ENCODE measurements at regions of chr7 and their contacts with region 1.

Region 1: DNA sequence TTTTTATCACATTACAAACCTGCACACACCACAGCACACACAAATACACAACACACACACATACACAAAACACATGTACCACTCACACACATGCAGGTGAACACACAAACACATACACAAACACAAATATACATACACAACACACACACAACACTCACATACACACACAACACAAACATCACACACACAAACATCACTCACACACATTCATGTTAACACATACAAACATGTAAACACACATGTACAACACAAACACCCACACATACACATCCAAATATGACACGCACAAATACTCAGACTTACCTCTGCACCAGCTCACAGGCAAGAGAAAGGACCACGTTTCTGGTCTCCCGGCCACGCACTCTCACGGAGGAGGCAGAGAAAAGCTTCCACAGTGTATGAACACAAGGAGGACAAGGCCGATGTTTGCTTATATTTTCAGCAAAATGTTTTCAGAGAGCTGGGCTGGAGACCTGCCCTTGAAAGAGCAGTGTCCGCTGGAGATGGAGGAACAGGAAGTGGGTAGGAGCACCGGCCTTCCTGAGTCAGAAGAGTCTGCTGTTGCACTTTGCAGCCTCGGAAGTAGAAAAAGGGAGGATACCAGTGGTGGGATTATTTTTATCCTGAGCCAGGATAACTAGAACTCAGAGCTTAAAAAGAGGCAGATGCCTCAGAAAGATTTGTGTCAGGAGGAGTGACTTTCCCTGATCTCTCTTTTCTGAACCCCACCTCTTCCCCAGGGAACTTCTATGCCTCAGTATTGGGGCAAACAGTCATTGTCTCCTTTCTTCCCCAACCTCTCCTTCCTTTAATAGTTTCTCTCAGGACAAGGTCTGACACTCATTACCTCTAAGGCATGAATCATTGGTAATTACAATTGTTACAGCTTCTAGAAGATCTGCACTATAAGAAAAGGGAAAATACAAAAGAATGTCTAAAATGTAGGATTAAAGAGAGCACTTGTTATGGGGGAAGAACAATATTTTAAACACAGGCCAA is at the start of gene GIMAP6:
- DNase-seq: peak in 8 of 9 donors; percentile 37 to 61 (median 44)
- ATAC-seq: peak; percentile 67
- H3K4me3 ChIP-seq: peak within 1 kb of the TSS; percentile 66
- H3K4me3 Mint-ChIP-seq: peak within 1 kb of the TSS; percentile 89 to 99 (median 95)
- H3K27ac ChIP-seq: peak within 1 kb of the TSS; percentile 74
- H3K27ac Mint-ChIP-seq: peak within 1 kb of the TSS; percentile 89 to 99 (median 95)
- H3K4me1 ChIP-seq: peaks cover 48 to 52% of the 10 kb centered on the region in 2 donors
- H3K4me1 Mint-ChIP-seq: peaks cover 54 to 92% (median 84%) of the 10 kb centered on the region in 7 donors
- H3K27me3 ChIP-seq: no peaks in the 10 kb centered on the region
- H3K27me3 Mint-ChIP-seq: no peaks in the 10 kb centered on the region
- total RNA-seq, gene GIMAP6: 40.3 to 173 (median 152) TPM

Region 2: DNA sequence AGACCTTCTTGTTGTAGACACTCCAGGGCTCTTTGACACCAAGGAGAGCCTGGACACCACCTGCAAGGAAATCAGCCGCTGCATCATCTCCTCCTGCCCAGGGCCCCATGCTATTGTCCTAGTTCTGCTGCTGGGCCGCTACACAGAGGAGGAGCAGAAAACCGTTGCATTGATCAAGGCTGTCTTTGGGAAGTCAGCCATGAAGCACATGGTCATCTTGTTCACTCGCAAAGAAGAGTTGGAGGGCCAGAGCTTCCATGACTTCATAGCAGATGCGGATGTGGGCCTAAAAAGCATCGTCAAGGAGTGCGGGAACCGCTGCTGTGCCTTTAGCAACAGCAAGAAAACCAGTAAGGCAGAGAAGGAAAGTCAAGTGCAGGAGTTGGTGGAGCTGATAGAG is 112.0 kb before region 1 on chr7:
- CTCF ChIA-PET with region 1: interaction called, 5 read pairs
- POLR2A ChIA-PET with region 1: interaction called, 46 read pairs
- intact Hi-C with region 1: loop called (anchors 1 kb)
- DNase-seq: peak in 4 of 9 donors; percentile 17 to 51 (median 42)
- ATAC-seq: peak; percentile 29
- H3K4me3 ChIP-seq: peak overlapping the region; percentile 59
- H3K4me3 Mint-ChIP-seq: peak overlapping the region; percentile 93 to 100 (median 99)
- H3K27ac ChIP-seq: peak overlapping the region; percentile 84
- H3K27ac Mint-ChIP-seq: peak overlapping the region; percentile 80 to 98 (median 94)
- H3K4me1 ChIP-seq: peaks cover 8 to 9% of the 10 kb centered on the region in 2 donors
- H3K4me1 Mint-ChIP-seq: peaks cover 22 to 42% (median 36%) of the 10 kb centered on the region in 7 donors
- H3K27me3 ChIP-seq: no peaks in the 10 kb centered on the region
- H3K27me3 Mint-ChIP-seq: no peaks in the 10 kb centered on the region

Region 3: GRCh38 chr7:150586785-150587152 is 45.4 kb before region 1 on chr7:
- CTCF ChIA-PET with region 1: no interaction called
- POLR2A ChIA-PET with region 1: interaction called, 11 read pairs
- intact Hi-C with region 1: no loop called
- DNase-seq: no peak
- ATAC-seq: peak; percentile 61
- H3K4me3 ChIP-seq: no peak overlapping the region
- H3K4me3 Mint-ChIP-seq: peak overlapping the region in 9 of 10 donors; percentile 12 to 56 (median 38)
- H3K27ac ChIP-seq: peak overlapping the region; percentile 11
- H3K27ac Mint-ChIP-seq: peak overlapping the region; percentile 63 to 97 (median 80)
- H3K4me1 ChIP-seq: peaks cover 16 to 29% of the 10 kb centered on the region in 2 donors
- H3K4me1 Mint-ChIP-seq: peaks cover 27 to 87% (median 75%) of the 10 kb centered on the region in 7 donors
- H3K27me3 ChIP-seq: no peaks in the 10 kb centered on the region
- H3K27me3 Mint-ChIP-seq: no peaks in the 10 kb centered on the region

Region 4: GRCh38 chr7:150648353-150649079 is 16.4 kb after region 1 on chr7:
- CTCF ChIA-PET with region 1: interaction called, 3 read pairs
- POLR2A ChIA-PET with region 1: interaction called, 29 read pairs
- intact Hi-C with region 1: no loop called
- DNase-seq: peak in 5 of 9 donors; percentile 30 to 63 (median 41)
- ATAC-seq: peak; percentile 78
- H3K4me3 ChIP-seq: no peak overlapping the region
- H3K4me3 Mint-ChIP-seq: peak overlapping the region; percentile 36 to 82 (median 54)
- H3K27ac ChIP-seq: peak overlapping the region; percentile 46
- H3K27ac Mint-ChIP-seq: peak overlapping the region; percentile 66 to 94 (median 88)
- H3K4me1 ChIP-seq: peaks cover 22 to 45% of the 10 kb centered on the region in 2 donors
- H3K4me1 Mint-ChIP-seq: peaks cover 26 to 84% (median 77%) of the 10 kb centered on the region in 7 donors
- H3K27me3 ChIP-seq: no peaks in the 10 kb centered on the region
- H3K27me3 Mint-ChIP-seq: no peaks in the 10 kb centered on the region

Region 5: GRCh38 chr7:150685219-150686029 is 53.3 kb after region 1 on chr7 and contains the start of gene GIMAP2:
- CTCF ChIA-PET with region 1: interaction called, 8 read pairs
- POLR2A ChIA-PET with region 1: interaction called, 96 read pairs
- intact Hi-C with region 1: loop called (anchors 2 kb)
- DNase-seq: peak in 7 of 9 donors; percentile 40 to 73 (median 65)
- ATAC-seq: peak; percentile 90
- H3K4me3 ChIP-seq: peak within 1 kb of the TSS; percentile 97
- H3K4me3 Mint-ChIP-seq: peak within 1 kb of the TSS; percentile 88 to 100 (median 98)
- H3K27ac ChIP-seq: peak within 1 kb of the TSS; percentile 78
- H3K27ac Mint-ChIP-seq: peak within 1 kb of the TSS; percentile 91 to 100 (median 97)
- H3K4me1 ChIP-seq: peaks cover 49 to 53% of the 10 kb centered on the region in 2 donors
- H3K4me1 Mint-ChIP-seq: peaks cover 50 to 87% (median 81%) of the 10 kb centered on the region in 7 donors
- H3K27me3 ChIP-seq: no peaks in the 10 kb centered on the region
- H3K27me3 Mint-ChIP-seq: no peaks in the 10 kb centered on the region
- total RNA-seq, gene GIMAP2: 79.4 to 286 (median 122) TPM

Region 6: DNA sequence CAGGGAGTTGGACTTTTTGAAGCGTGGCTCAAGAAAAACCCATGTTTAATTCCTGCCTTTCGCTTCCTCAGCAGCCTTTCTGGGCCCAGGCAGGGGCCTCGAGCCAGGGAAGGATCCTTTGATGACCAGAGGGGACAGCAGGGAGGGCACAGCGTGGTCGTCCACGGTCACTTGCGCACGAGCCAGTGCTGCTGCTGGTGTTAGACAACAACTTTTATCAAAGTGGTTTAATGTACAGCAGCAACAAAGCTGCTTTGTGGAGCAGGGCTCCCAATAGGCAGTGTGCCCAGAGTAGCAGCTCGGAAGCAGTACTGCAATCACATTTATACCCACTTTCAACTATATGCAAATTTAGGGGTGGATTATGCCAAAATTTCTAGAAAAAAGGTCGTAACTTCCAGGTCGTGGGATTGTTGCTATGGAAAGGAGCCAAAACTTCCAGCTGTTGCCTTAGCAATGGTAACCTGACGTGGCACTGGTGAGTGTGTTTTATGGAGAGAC is 90.3 kb after region 1 on chr7:
- CTCF ChIA-PET with region 1: interaction called, 4 read pairs
- POLR2A ChIA-PET with region 1: interaction called, 98 read pairs
- intact Hi-C with region 1: no loop called
- DNase-seq: no peak
- ATAC-seq: no peak
- H3K4me3 ChIP-seq: peak overlapping the region; percentile 18
- H3K4me3 Mint-ChIP-seq: peak overlapping the region; percentile 72 to 98 (median 79)
- H3K27ac ChIP-seq: peak overlapping the region; percentile 65
- H3K27ac Mint-ChIP-seq: peak overlapping the region in 8 of 9 donors; percentile 14 to 89 (median 80)
- H3K4me1 ChIP-seq: peaks cover 39 to 43% of the 10 kb centered on the region in 2 donors
- H3K4me1 Mint-ChIP-seq: peaks cover 45 to 86% (median 78%) of the 10 kb centered on the region in 7 donors
- H3K27me3 ChIP-seq: no peaks in the 10 kb centered on the region
- H3K27me3 Mint-ChIP-seq: no peaks in the 10 kb centered on the region

Region 7: DNA sequence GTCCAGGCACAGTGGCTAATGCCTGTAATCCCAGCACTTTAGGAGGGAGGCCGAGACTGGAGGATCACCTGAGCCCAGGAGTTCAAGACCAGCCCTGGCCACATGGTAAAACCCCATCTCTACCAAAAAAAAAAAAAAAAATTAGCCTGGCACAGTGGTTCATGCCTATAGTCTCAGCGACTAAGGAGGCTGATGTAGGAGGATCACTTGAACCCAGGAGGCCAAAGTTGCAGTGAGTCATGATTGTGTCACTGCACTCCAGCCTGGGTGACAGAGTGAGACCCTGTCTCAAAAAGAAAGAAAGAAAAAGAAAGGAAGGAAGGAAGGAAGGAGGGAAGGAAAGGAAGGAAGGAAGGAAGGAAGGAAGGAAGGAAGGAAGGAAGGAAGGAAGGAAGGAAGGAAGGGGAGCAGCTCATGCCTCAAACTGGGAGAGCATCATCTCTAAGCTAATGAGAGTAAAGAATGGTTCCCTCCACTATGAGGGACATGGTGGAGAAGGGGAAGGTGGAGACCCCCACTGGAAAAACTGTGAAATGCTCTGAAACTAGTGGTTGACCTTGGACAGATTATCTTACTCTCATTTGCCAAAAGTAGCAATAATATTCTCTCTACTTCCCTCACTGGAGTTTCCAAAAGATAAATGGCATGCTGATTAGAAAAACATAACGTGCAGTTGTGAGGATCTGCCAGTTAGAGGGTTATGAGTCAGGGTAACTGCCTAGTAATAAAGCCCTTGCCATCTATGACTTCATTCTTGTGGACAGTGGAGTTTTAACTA is 121.8 kb after region 1 on chr7:
- CTCF ChIA-PET with region 1: interaction called, 4 read pairs
- POLR2A ChIA-PET with region 1: interaction called, 32 read pairs
- intact Hi-C with region 1: loop called (anchors 1 kb)
- DNase-seq: peak in 1 of 9 donors; percentile 36
- ATAC-seq: no peak
- H3K4me3 ChIP-seq: no peak overlapping the region
- H3K4me3 Mint-ChIP-seq: peak overlapping the region; percentile 30 to 83 (median 68)
- H3K27ac ChIP-seq: peak overlapping the region; percentile 60
- H3K27ac Mint-ChIP-seq: peak overlapping the region; percentile 88 to 97 (median 95)
- H3K4me1 ChIP-seq: peaks cover 44 to 70% of the 10 kb centered on the region in 2 donors
- H3K4me1 Mint-ChIP-seq: peaks cover 36 to 81% (median 78%) of the 10 kb centered on the region in 7 donors
- H3K27me3 ChIP-seq: no peaks in the 10 kb centered on the region
- H3K27me3 Mint-ChIP-seq: peaks cover 0 to 2% (median 0%) of the 10 kb centered on the region in 5 donors

Region 8: GRCh38 chr7:150903606-150904005 is 271.4 kb after region 1 on chr7:
- CTCF ChIA-PET with region 1: no interaction called
- POLR2A ChIA-PET with region 1: no interaction called
- intact Hi-C with region 1: no loop called
- DNase-seq: no peak
- ATAC-seq: no peak
- H3K4me3 ChIP-seq: no peak overlapping the region
- H3K4me3 Mint-ChIP-seq: no peak overlapping the region
- H3K27ac ChIP-seq: no peak overlapping the region
- H3K27ac Mint-ChIP-seq: no peak overlapping the region
- H3K4me1 ChIP-seq: peaks cover 0 to under 1% of the 10 kb centered on the region in 2 donors
- H3K4me1 Mint-ChIP-seq: peaks cover 0 to 7% (median 3%) of the 10 kb centered on the region in 7 donors
- H3K27me3 ChIP-seq: no peaks in the 10 kb centered on the region
- H3K27me3 Mint-ChIP-seq: peaks cover 25 to 71% (median 30%) of the 10 kb centered on the region in 5 donors